MCF 10A (cell line): ENCODE measurements at regions of chr6 and their contacts with region 1.

Region 1: GRCh38 chr6:106477790-106478189 is 117.3 kb downstream of the CRYBG1 start:
- DNase-seq: peak; percentile 66
- H3K4me3 Mint-ChIP-seq: no peak overlapping the region
- H3K27ac Mint-ChIP-seq: no peak overlapping the region
- H3K4me1 Mint-ChIP-seq: peaks cover 13% of the 10 kb centered on the region
- H3K27me3 Mint-ChIP-seq: no peaks in the 10 kb centered on the region
- CTCF ChIP-seq: no peak

Region 2: DNA sequence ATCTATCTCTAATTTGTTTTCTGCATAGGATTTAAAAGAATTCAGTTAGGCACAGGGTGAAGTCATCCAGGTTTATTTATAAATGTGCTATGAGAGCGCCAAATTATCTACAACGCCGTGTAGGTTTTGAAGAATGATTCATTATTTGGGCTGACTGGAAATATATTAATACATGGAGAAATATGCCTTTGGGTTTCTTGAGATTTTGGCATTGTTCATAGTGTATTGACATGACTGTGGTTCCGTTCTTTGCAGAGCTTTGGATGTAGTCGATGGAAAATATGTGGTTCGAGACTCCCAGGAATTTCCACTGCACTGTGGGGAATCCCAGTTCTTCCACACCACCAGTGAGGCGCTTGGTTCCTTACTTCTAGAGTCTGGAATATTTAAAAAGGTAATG is 26.4 kb before region 1 on chr6:
- CTCF ChIA-PET with region 1: interaction called, 15 read pairs
- POLR2A ChIA-PET with region 1: interaction called, 7 read pairs
- intact Hi-C with region 1: no loop called
- DNase-seq: peak; percentile 25
- H3K4me3 Mint-ChIP-seq: no peak overlapping the region
- H3K27ac Mint-ChIP-seq: peak overlapping the region; percentile 43
- H3K4me1 Mint-ChIP-seq: peaks cover 25% of the 10 kb centered on the region
- H3K27me3 Mint-ChIP-seq: no peaks in the 10 kb centered on the region
- CTCF ChIP-seq: no peak

Region 3: GRCh38 chr6:106488494-106489370 is 10.9 kb after region 1 on chr6:
- CTCF ChIA-PET with region 1: interaction called, 4 read pairs
- POLR2A ChIA-PET with region 1: interaction called, 21 read pairs
- intact Hi-C with region 1: no loop called
- DNase-seq: no peak
- H3K4me3 Mint-ChIP-seq: no peak overlapping the region
- H3K27ac Mint-ChIP-seq: no peak overlapping the region
- H3K4me1 Mint-ChIP-seq: peaks cover 34% of the 10 kb centered on the region
- H3K27me3 Mint-ChIP-seq: no peaks in the 10 kb centered on the region
- CTCF ChIP-seq: no peak

Region 4: DNA sequence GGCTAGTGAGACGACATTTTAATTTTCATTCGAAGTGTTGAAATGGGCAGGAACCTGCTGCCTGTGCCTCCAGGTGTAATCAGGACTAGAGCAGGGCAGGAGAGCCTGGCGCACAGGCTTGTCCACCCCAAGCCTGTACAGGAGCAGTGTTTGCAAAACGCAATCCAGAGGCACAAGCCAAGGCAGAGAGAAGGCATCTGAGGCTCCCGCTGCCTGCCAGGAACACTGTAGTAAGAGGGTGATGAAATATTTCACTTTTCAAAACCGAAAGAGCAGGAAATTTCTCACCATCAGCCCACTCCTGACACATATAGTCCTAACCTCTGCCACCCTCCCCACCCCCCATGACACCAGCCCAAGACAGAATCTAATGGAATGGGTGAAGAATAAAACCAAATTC is 19.0 kb after region 1 on chr6:
- CTCF ChIA-PET with region 1: interaction called, 4 read pairs
- POLR2A ChIA-PET with region 1: interaction called, 29 read pairs
- intact Hi-C with region 1: no loop called
- DNase-seq: peak; percentile 94
- H3K4me3 Mint-ChIP-seq: peak overlapping the region; percentile 61
- H3K27ac Mint-ChIP-seq: peak overlapping the region; percentile 93
- H3K4me1 Mint-ChIP-seq: peaks cover 38% of the 10 kb centered on the region
- H3K27me3 Mint-ChIP-seq: no peaks in the 10 kb centered on the region
- CTCF ChIP-seq: no peak

Region 5: DNA sequence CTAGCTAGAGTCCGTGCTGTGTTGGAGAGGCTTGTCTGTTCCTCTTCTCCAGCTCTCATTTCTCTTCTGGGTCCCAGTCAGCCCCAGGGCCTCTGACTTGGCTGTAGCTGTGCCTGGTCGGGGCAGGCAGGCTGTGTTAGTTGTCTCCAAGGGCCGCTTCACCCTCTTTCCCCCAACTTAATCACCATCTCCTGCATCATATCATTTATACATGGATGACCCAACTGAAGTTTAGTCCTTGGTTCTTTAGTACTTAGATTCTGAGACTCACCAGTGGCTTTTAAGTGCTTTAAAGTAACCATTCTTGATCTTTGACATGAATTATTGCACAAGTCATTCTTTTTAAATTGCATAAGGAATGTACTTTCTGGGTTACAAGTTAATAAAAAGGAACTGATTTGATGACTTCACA is 24.2 kb after region 1 on chr6:
- CTCF ChIA-PET with region 1: interaction called, 6 read pairs
- POLR2A ChIA-PET with region 1: interaction called, 16 read pairs
- intact Hi-C with region 1: no loop called
- DNase-seq: peak; percentile 64
- H3K4me3 Mint-ChIP-seq: peak overlapping the region; percentile 25
- H3K27ac Mint-ChIP-seq: peak overlapping the region; percentile 74
- H3K4me1 Mint-ChIP-seq: peaks cover 35% of the 10 kb centered on the region
- H3K27me3 Mint-ChIP-seq: no peaks in the 10 kb centered on the region
- CTCF ChIP-seq: no peak